Endothelial cell of umbilical vein (primary cell): ENCODE measurements at regions of chr2 and their contacts with region 1.

Region 1: DNA sequence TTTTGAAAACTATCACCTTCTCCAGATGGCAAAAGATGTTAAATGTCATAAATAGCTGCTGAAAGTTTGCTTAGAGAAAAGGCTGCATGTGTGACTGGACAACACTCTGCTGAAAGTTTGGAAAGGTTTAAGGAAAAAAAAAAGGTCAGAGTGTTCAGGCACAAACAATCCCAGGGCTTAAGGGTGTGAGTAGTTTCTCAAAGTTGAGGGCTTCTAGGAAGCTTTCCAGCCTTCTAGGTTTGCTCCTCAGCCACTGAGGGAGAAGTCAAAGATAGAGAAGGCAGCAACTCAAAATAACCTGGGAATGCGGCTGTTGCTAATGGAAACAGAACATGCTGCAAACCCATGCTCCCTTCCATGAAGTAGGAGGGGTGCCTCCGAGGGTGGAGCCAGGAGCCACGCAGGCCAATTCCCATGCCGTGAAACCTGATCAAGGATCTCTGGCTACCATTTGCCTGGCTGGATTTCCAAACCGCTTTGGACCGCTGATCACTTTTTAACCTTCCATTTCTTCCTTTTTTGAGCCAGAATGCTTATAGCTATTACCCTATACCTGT is 88.0 kb downstream of the TEX51 start:
- DNase-seq: no peak
- H3K4me3 ChIP-seq: no peak overlapping the region
- H3K27ac ChIP-seq: no peak overlapping the region
- H3K4me1 ChIP-seq: no peaks in the 10 kb centered on the region
- H3K27me3 ChIP-seq: no peaks in the 10 kb centered on the region
- CTCF ChIP-seq: no peak
- POLR2A ChIP-seq: no peak

Region 2: GRCh38 chr2:126971481-126972278 is 15.0 kb before region 1 on chr2:
- CTCF ChIA-PET with region 1: interaction called, 12 read pairs
- POLR2A ChIA-PET with region 1: no interaction called
- dilution Hi-C with region 1: no loop called
- intact Hi-C with region 1: no loop called
- DNase-seq: peak; percentile 63
- H3K4me3 ChIP-seq: peak overlapping the region in 1 of 3 experiments; percentile 10
- H3K27ac ChIP-seq: no peak overlapping the region
- H3K4me1 ChIP-seq: no peaks in the 10 kb centered on the region
- H3K27me3 ChIP-seq: peaks cover 11% of the 10 kb centered on the region in 2 experiments
- CTCF ChIP-seq: peak; percentile 85 to 98
- POLR2A ChIP-seq: no peak

Region 3: GRCh38 chr2:127408004-127408806 is 421.5 kb after region 1 on chr2:
- CTCF ChIA-PET with region 1: no interaction called
- POLR2A ChIA-PET with region 1: no interaction called
- dilution Hi-C with region 1: no loop called
- intact Hi-C with region 1: no loop called
- DNase-seq: peak; percentile 92
- H3K4me3 ChIP-seq: peak overlapping the region in 2 of 3 experiments; percentile 27 to 34
- H3K27ac ChIP-seq: peak overlapping the region; percentile 95
- H3K4me1 ChIP-seq: peaks cover 40% of the 10 kb centered on the region
- H3K27me3 ChIP-seq: no peaks in the 10 kb centered on the region
- CTCF ChIP-seq: no peak
- POLR2A ChIP-seq: no peak